ENCODE measurements at regions of chr4 and their contacts with region 1.

Region 1: DNA sequence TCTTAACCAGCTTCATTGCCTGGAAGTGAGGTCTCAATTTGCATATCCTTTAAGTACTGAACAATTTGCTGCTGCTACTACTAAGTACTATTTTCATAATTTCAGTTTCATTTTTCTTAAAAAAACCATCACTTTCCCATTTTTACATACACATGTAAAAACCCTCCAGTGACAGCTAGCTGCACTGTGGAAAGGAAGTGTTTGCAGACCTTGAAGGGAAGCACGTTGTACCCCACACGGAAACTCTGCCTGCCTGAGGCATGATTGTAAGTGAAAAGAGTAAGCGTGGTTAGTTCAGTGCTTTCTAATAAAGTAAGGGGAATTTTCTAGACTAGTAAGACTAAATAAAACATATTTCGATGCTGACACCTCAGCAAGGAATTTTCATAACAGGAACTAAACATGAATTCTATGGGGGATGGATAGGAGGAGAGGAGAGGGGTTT is 103.6 kb downstream of the RAPGEF2 start:
- DNase-seq: no peak
- H3K4me3 ChIP-seq: no peak overlapping the region
- H3K27ac ChIP-seq: peak overlapping the region in 1 of 2 experiments; percentile 2; a peak in 2 of 4 replicates
- H3K4me1 ChIP-seq: peaks cover 0 to 3% of the 10 kb centered on the region in 2 experiments; a peak in 1 of 4 replicates
- H3K27me3 ChIP-seq: no peaks in the 10 kb centered on the region
- CTCF ChIP-seq: no peak
- EP300 ChIP-seq: no peak
- RAD21 ChIP-seq: no peak

Region 2: GRCh38 chr4:158729716-158730559 is 476.5 kb before region 1 on chr4:
- CTCF ChIA-PET with region 1: interaction called, 11 read pairs
- POLR2A ChIA-PET with region 1: no interaction called
- DNase-seq: peak; percentile 75
- H3K4me3 ChIP-seq: no peak overlapping the region
- H3K27ac ChIP-seq: no peak overlapping the region
- H3K4me1 ChIP-seq: no peaks in the 10 kb centered on the region
- H3K27me3 ChIP-seq: no peaks in the 10 kb centered on the region
- CTCF ChIP-seq: peak; percentile 93
- EP300 ChIP-seq: no peak
- RAD21 ChIP-seq: peak; percentile 97

Region 3: GRCh38 chr4:158845311-158846041 is 361.0 kb before region 1 on chr4:
- CTCF ChIA-PET with region 1: interaction called, 13 read pairs
- POLR2A ChIA-PET with region 1: no interaction called
- DNase-seq: no peak
- H3K4me3 ChIP-seq: no peak overlapping the region
- H3K27ac ChIP-seq: no peak overlapping the region
- H3K4me1 ChIP-seq: no peaks in the 10 kb centered on the region
- H3K27me3 ChIP-seq: no peaks in the 10 kb centered on the region
- CTCF ChIP-seq: no peak
- EP300 ChIP-seq: no peak
- RAD21 ChIP-seq: no peak

Region 4: GRCh38 chr4:158850800-158851644 is 355.4 kb before region 1 on chr4:
- CTCF ChIA-PET with region 1: interaction called, 32 read pairs
- POLR2A ChIA-PET with region 1: no interaction called
- DNase-seq: peak; percentile 41
- H3K4me3 ChIP-seq: no peak overlapping the region
- H3K27ac ChIP-seq: no peak overlapping the region
- H3K4me1 ChIP-seq: no peaks in the 10 kb centered on the region
- H3K27me3 ChIP-seq: no peaks in the 10 kb centered on the region
- CTCF ChIP-seq: peak; percentile 84
- EP300 ChIP-seq: no peak
- RAD21 ChIP-seq: peak; percentile 69

Region 5: DNA sequence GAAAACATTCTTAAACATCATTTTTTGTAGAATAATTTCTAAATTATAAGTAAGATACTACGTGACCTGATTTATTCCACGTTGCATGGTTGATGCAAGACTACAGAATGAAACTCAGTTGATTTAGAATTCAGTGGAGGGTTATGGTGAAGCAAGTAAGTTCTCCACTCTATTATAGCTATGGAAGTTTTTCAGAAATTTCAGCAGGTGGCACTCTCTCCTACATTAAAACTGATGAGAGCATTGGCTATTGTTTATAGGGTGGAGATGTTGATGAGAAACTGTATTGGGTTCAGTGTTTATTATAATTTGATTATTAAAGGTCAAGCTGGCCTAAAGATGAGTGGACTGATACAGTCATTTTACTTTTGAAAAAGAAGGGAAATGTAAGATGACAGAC is 349.6 kb before region 1 on chr4:
- CTCF ChIA-PET with region 1: interaction called, 32 read pairs
- POLR2A ChIA-PET with region 1: no interaction called
- DNase-seq: peak; percentile 44
- H3K4me3 ChIP-seq: no peak overlapping the region; a peak in 1 of 4 replicates
- H3K27ac ChIP-seq: peak overlapping the region in 1 of 2 experiments; percentile 18; a peak in 1 of 4 replicates
- H3K4me1 ChIP-seq: peaks cover 0 to 11% of the 10 kb centered on the region in 2 experiments; a peak in 2 of 4 replicates
- H3K27me3 ChIP-seq: no peaks in the 10 kb centered on the region
- CTCF ChIP-seq: peak; percentile 74
- EP300 ChIP-seq: no peak
- RAD21 ChIP-seq: peak; percentile 81

Region 6: DNA sequence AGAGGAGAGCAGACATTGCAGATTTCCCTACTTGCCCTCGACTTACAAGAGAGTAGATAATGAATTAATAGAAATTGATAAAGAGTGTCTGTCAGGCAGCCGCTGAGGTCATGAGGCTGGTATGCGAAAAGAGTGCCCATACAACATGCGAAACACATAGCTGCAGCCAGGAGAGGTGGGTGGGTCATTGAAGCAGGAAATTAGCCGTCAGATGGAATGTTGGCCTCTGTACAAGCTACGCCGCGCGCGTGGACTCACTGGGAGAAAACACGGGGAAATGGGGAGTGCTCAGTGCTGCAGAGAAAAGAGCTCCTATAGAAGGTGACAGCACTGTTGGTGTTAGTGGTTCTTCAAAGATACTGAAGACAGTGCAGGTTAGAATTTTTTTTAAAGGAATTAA is 21.5 kb after region 1 on chr4:
- CTCF ChIA-PET with region 1: interaction called, 10 read pairs
- POLR2A ChIA-PET with region 1: no interaction called
- DNase-seq: peak; percentile 27
- H3K4me3 ChIP-seq: peak overlapping the region; percentile 10 to 19
- H3K27ac ChIP-seq: peak overlapping the region; percentile 69 to 76
- H3K4me1 ChIP-seq: peaks cover 4 to 16% of the 10 kb centered on the region in 2 experiments; a peak in 3 of 4 replicates
- H3K27me3 ChIP-seq: no peaks in the 10 kb centered on the region
- CTCF ChIP-seq: no peak
- EP300 ChIP-seq: peak in 1 of 2 experiments; percentile 43; a peak in 2 of 4 replicates
- RAD21 ChIP-seq: no peak

Region 7: DNA sequence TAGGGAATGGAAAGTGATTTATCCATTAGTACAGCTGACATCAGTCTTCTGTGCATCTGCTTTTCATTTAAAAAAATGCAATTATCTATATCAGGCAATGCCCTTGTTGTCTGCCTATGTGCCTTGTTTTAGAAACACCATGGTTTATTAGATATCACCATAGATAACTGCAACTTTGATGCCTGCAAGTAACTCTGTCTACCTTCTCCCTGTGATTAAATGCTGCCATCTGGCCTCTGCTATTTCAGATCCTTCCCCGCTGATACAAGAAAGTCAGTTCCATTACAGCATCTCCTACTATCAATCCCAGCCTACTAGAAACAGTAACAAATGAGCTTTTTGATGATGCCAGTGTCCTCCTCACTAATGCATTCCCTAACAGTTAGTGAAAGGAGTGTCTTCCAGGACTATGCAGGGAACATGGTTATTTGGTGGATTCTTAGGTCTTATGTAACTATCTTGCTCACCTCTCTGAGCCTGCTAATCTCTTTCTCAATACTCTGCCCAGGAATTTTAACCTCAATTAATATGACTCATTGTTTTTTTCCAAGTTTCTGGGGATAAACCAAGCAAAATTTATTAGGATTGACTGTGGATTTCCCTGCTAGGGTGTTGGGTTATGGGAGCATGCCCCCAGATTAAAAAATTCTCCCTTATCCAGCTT is 341.3 kb after region 1 on chr4:
- CTCF ChIA-PET with region 1: no interaction called
- POLR2A ChIA-PET with region 1: no interaction called
- DNase-seq: peak; percentile 37
- H3K4me3 ChIP-seq: no peak overlapping the region
- H3K27ac ChIP-seq: peak overlapping the region in 1 of 2 experiments; percentile 74; a peak in 2 of 4 replicates
- H3K4me1 ChIP-seq: peaks cover 0 to 5% of the 10 kb centered on the region in 2 experiments; a peak in 2 of 4 replicates
- H3K27me3 ChIP-seq: no peaks in the 10 kb centered on the region
- CTCF ChIP-seq: no peak
- EP300 ChIP-seq: peak in 1 of 2 experiments; percentile 87; a peak in 2 of 4 replicates
- RAD21 ChIP-seq: peak; percentile 14; the same call in 1 of the 2 replicates

Measured in SK-N-SH (cell line).